SK-N-SH (cell line): ENCODE measurements at regions of chr5 and their contacts with region 1.

Region 1: DNA sequence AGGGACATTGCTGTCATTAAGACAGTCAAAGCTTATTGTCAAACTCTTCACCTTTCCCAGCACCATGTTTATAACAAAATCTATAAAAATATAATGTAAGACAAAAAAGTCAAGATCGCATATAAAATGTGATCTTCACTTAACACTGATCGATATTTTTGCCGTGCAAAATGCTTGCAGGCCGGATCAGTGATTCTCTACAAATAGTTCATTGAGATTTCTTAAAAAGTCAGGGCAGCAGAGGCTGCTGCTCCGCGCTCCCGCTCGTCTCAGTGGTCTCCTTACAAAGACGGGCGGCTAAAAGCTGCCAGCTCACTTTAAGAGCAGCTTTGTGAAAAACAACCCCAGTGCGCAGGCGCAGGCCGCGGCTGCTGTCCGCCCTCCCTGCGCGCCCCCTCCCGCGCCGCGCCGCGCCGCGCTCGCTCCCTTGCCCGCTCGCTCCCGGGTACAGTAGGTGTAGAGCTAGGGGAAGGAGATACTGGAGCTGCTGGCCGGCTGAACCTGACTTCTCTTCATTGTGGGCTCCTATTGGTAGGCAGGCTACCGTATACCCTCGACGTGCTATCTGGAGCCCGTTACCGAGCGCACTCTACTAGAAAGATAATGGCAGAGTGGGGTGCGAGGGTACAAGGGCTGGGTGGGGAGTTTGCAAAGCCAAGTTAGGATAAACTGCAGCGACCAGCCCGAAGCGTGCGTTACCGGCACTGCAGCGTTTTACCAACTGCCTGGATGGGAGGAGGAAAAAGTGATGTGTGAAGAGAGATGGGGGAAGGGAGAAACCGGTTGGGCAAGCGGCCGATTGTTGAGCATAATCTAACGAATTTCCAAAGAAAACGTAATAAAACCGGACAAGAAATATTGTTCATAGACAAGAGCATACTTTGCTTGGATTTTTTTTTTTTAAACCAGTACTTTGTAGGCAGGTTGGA is at the start of gene ARRDC3:
- DNase-seq: peak; percentile 87
- H3K4me3 ChIP-seq: peak within 1 kb of the TSS; percentile 89 to 94
- H3K27ac ChIP-seq: peak within 1 kb of the TSS; percentile 100
- H3K4me1 ChIP-seq: peaks cover 1 to 5% of the 10 kb centered on the region in 2 experiments; a peak in 2 of 4 replicates
- H3K27me3 ChIP-seq: no peaks in the 10 kb centered on the region
- CTCF ChIP-seq: no peak
- EP300 ChIP-seq: peak; percentile 9 to 46; a peak in 2 of 4 replicates
- RAD21 ChIP-seq: peak; percentile 1; the same call in 1 of the 2 replicates
- polyA plus RNA-seq, gene ARRDC3: 24.6 and 26.0 TPM in 2 replicates

Region 2: DNA sequence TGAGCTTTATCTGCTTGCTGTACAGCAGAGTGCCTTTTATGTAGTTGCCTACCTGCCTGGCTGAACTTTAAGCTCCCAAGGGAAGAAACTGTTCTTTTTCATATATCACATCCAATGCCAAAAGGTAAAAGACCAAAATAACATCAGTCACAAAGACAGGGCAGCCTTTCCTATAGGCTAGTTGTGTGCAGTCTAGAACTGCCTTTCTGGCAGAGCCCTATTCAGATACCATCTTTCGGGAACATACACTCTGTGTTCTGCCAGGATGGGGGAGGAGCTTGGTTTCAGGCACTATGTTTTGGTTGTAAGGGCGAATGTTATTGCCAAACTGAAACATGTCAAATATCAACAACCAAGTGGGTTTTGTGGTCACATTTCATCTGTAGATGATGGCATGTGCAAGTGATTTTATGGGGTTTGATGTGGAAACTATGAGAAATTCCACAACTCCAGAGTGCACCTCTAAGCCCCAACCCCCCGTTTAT is 510.2 kb before region 1 on chr5:
- CTCF ChIA-PET with region 1: interaction called, 109 read pairs
- POLR2A ChIA-PET with region 1: no interaction called
- DNase-seq: no peak
- H3K4me3 ChIP-seq: no peak overlapping the region
- H3K27ac ChIP-seq: no peak overlapping the region
- H3K4me1 ChIP-seq: no peaks in the 10 kb centered on the region
- H3K27me3 ChIP-seq: 0 out of 2 replicates have a peak, but pooled peaks cover 6% of the 10 kb centered on the region
- CTCF ChIP-seq: no peak
- EP300 ChIP-seq: no peak
- RAD21 ChIP-seq: no peak

Region 3: GRCh38 chr5:91095313-91095712 is 288.0 kb before region 1 on chr5:
- CTCF ChIA-PET with region 1: interaction called, 33 read pairs
- POLR2A ChIA-PET with region 1: interaction called, 3 read pairs
- DNase-seq: no peak
- H3K4me3 ChIP-seq: no peak overlapping the region
- H3K27ac ChIP-seq: no peak overlapping the region
- H3K4me1 ChIP-seq: no peaks in the 10 kb centered on the region; a peak in 3 of 4 replicates
- H3K27me3 ChIP-seq: no peaks in the 10 kb centered on the region
- CTCF ChIP-seq: no peak
- EP300 ChIP-seq: no peak
- RAD21 ChIP-seq: no peak

Region 4: DNA sequence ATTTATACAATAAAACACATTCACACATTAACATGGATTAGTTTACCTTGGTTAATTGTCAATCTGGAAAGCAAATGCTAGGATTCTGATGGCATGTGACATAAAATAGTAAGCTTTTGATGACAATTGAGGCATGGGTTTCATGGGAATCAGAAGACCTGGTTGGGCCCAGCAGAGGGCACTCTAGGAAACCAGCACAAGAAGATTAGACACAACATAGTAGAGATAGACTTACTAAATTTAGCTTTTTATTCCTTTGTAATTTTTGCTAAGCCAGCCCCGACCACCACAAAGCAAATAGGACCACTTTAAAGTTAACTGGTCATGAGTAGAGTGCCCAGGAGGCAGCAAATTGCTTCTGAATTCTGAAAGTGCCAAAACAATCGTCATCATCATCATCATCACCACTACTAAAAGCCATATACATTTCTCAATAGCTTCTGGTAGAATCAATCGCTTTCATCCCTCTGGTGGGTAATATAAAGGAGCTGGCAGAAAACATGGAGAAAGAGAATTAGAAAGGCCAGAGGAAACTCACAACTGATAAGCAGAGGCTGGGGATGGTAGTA is 163.4 kb before region 1 on chr5:
- CTCF ChIA-PET with region 1: interaction called, 42 read pairs
- POLR2A ChIA-PET with region 1: interaction called, 5 read pairs
- DNase-seq: peak; percentile 16
- H3K4me3 ChIP-seq: no peak overlapping the region
- H3K27ac ChIP-seq: no peak overlapping the region
- H3K4me1 ChIP-seq: peaks cover 0 to 10% of the 10 kb centered on the region in 2 experiments; a peak in 1 of 4 replicates
- H3K27me3 ChIP-seq: no peaks in the 10 kb centered on the region
- CTCF ChIP-seq: peak; percentile 57
- EP300 ChIP-seq: no peak
- RAD21 ChIP-seq: peak; percentile 45

Region 5: GRCh38 chr5:91266184-91266705 is 117.0 kb before region 1 on chr5:
- CTCF ChIA-PET with region 1: interaction called, 10 read pairs
- POLR2A ChIA-PET with region 1: no interaction called
- DNase-seq: peak; percentile 15
- H3K4me3 ChIP-seq: no peak overlapping the region
- H3K27ac ChIP-seq: peak overlapping the region in 1 of 2 experiments; percentile 30; a peak in 1 of 4 replicates
- H3K4me1 ChIP-seq: peaks cover 0 to 2% of the 10 kb centered on the region in 2 experiments; a peak in 2 of 4 replicates
- H3K27me3 ChIP-seq: no peaks in the 10 kb centered on the region
- CTCF ChIP-seq: peak; percentile 29; the same call in 1 of the 2 replicates
- EP300 ChIP-seq: no peak
- RAD21 ChIP-seq: no peak

Region 6: DNA sequence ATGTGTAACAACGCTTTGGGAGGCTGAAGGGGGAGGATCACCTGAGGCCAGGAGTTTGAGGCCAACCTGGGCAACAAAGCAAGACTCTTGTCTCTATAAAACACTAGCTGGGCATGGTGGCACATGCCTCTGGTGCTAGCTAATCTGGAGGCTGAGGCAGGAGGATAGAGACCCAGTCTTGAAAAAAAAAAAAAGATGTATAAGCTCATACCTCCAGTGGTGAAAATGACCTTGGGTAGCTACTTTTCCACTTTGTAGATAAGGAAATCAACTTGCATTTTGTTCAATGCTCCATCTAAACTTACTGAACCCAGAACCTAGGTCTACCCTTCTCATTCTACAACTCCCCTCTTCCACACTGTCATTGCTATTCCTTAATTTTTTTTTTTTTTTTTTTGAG is 16.7 kb before region 1 on chr5:
- CTCF ChIA-PET with region 1: interaction called, 17 read pairs
- POLR2A ChIA-PET with region 1: interaction called, 4 read pairs
- DNase-seq: no peak
- H3K4me3 ChIP-seq: no peak overlapping the region
- H3K27ac ChIP-seq: no peak overlapping the region
- H3K4me1 ChIP-seq: no peaks in the 10 kb centered on the region; a peak in 1 of 4 replicates
- H3K27me3 ChIP-seq: no peaks in the 10 kb centered on the region
- CTCF ChIP-seq: no peak
- EP300 ChIP-seq: no peak
- RAD21 ChIP-seq: no peak